ENCODE measurements at regions of chr6 and their contacts with region 1.

Region 1: DNA sequence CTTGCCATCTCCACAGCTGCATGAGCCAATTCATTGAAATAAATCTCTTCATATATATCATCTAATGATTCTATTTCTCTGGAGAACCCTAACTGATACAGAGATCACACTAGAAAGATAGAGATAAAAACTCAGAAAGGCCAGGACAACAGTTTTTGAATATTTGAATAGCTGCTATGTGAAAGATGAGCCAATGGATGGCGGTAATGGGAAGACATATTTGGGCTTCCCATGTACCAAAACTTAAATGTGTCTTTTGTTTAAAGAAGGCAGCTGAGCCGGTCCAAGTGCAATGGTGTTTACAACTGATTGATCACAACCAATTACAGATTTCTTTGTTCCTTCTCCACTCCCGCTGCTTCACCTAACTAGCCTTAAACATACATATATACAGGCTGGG is 35.1 kb downstream of the SGK1 start:
- H3K4me3 Mint-ChIP-seq: no peak overlapping the region
- H3K27ac Mint-ChIP-seq: no peak overlapping the region
- H3K4me1 Mint-ChIP-seq: peaks cover 9% of the 10 kb centered on the region
- H3K27me3 Mint-ChIP-seq: no peaks in the 10 kb centered on the region

Region 2: DNA sequence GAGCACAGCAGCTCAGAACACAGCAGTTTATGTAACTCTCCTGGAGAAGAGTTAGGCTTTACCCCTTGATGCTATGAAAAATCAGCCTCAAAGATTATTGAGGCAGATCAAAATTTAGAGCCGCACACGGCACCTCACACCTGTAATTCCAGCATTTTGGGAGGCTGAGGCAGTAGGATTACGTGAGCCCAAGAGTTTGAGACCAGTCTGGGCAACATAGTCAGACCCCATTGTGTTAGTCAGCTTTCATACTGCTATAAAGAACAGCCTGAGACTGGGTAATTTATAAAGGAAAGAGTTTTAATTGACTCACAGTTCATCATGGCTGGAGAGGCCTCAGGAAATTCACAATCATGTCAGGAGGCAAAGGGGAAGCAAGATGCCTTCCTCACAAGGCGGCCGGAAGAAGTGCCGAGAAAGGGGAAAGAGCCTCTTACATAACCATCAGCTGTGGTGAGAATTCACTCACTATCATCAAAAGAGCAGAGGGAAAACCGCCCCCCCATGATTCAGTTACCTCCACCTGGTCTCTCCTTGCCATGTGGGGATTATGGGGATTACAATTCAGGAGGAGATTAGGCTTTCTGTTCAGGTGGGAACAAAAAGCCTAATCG is 52.6 kb before region 1 on chr6:
- intact Hi-C with region 1: loop called (anchors 5 kb)
- H3K4me3 Mint-ChIP-seq: no peak overlapping the region
- H3K27ac Mint-ChIP-seq: no peak overlapping the region
- H3K4me1 Mint-ChIP-seq: peaks cover 20% of the 10 kb centered on the region
- H3K27me3 Mint-ChIP-seq: no peaks in the 10 kb centered on the region

Region 3: GRCh38 chr6:134235937-134236751 is 46.7 kb before region 1 on chr6:
- intact Hi-C with region 1: loop called (anchors 5 kb)
- H3K4me3 Mint-ChIP-seq: no peak overlapping the region
- H3K27ac Mint-ChIP-seq: peak overlapping the region; percentile 80
- H3K4me1 Mint-ChIP-seq: peaks cover 26% of the 10 kb centered on the region
- H3K27me3 Mint-ChIP-seq: no peaks in the 10 kb centered on the region

Region 4: GRCh38 chr6:134309983-134310605 is 27.3 kb after region 1 on chr6:
- intact Hi-C with region 1: no loop called
- H3K4me3 Mint-ChIP-seq: no peak overlapping the region
- H3K27ac Mint-ChIP-seq: no peak overlapping the region
- H3K4me1 Mint-ChIP-seq: peaks cover 5% of the 10 kb centered on the region
- H3K27me3 Mint-ChIP-seq: peaks cover 10% of the 10 kb centered on the region

Measured in dendritic cell treated with granulocyte-macrophage colony-stimulating factor and Interleukin-4, amounts not matched to agents 40 ng/mL and 50 ng/mL, for 4 days (primary cell).